ENCODE measurements at regions of chr2 and their contacts with region 1.

Region 1: DNA sequence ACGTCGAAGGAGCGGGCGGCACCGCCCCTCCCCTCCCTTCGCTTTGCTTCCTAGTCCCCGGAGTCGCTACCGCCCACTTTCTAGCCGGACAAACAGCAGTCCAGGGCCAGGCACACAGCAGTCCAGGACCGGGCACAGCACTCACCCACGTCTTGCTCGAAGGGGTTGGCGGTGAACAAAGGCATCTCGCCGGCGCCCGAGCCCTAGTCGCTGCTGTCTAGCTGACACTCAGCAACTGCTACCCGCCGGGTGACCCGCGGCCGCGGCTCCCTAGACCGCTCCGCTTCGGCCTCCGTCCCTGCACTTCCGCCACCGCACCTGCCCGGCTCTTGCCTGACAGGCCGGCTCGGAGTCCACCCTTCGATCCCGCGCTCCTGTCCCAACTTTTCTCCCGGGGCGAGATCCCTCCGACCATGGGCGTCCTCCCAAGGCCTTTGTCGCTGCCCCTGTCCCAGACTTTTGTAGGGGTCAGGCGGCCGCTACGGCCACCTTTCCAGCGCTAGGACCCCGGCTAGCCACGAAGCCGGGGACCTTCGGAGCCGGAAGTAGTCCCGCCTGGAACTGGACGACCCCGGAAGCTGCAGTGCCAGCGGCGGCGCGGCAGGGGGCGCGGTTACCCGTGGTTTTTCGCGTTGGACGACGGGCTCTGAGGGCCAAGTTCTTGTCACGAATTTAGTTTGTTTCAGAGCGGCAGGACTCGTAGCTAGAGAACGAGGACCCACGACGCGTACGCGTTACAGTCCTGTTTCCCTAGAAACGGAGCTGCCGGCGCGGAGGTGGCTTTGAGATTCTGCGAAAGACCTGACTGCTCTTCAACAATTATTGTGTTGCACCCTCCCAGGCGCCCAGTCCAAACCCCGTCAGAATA is at the start of gene STAM2:
- DNase-seq: peak; percentile 94
- ATAC-seq: peak; percentile 84
- H3K4me3 Mint-ChIP-seq: peak within 1 kb of the TSS; percentile 97
- H3K27ac Mint-ChIP-seq: peak within 1 kb of the TSS; percentile 100
- H3K4me1 Mint-ChIP-seq: peaks cover 40% of the 10 kb centered on the region
- H3K27me3 Mint-ChIP-seq: peaks cover 2% of the 10 kb centered on the region
- CTCF ChIP-seq: peak; percentile 25
- total RNA-seq, gene STAM2: 24.5 and 27.4 TPM in 2 replicates

Region 2: DNA sequence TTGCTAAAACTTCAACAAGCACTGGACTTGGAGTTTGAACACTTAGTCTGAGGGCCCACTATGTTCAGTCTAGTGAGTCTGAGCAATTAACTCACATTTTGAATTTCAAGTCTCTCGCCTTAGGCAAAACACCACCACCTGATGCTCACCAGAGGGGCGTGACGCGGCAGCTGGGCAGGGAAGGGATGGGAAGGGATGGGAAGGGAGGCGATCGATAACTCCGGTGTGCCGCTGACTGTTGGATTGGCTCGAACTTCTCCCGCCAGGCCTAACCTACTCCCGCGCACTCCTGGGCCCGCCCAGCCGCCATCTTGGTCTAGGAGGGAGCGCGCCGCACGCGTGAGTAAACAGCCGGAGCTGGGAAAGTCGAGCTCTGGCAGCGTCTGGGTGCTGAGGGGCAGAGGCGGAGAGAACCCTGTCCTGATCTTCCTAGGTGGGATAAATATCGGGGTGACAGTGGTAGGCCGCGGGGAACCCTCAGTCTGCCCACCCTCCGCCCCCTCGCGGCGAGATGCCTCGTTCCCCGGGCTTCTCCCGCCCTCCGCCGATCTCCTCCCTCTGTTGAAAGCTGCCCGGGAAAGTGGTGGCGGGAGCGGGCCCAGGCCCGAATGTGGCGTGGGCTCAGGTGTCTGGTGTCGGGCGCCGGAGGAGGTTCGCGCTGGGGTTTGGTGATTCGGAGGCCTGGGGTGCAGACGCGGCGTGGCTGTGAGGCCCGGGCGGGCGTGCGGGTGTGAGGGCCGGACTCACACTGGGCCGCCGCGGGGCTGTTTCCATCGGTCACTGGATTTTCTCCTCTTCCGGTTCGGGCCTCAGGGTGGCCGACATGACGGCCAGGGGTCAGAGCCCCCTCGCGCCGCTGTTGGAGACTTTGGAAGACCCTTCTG is 765.8 kb before region 1 on chr2 and contains the start of gene RIF1:
- CTCF ChIA-PET with region 1: no interaction called
- POLR2A ChIA-PET with region 1: interaction called, 9 read pairs
- intact Hi-C with region 1: loop called (anchors 5 kb)
- DNase-seq: peak; percentile 73
- ATAC-seq: peak; percentile 90
- H3K4me3 Mint-ChIP-seq: peak within 1 kb of the TSS; percentile 89
- H3K27ac Mint-ChIP-seq: peak within 1 kb of the TSS; percentile 80
- H3K4me1 Mint-ChIP-seq: peaks cover 26% of the 10 kb centered on the region
- H3K27me3 Mint-ChIP-seq: no peaks in the 10 kb centered on the region
- CTCF ChIP-seq: no peak
- total RNA-seq, gene RIF1: 43.7 and 51.1 TPM in 2 replicates

Region 3: DNA sequence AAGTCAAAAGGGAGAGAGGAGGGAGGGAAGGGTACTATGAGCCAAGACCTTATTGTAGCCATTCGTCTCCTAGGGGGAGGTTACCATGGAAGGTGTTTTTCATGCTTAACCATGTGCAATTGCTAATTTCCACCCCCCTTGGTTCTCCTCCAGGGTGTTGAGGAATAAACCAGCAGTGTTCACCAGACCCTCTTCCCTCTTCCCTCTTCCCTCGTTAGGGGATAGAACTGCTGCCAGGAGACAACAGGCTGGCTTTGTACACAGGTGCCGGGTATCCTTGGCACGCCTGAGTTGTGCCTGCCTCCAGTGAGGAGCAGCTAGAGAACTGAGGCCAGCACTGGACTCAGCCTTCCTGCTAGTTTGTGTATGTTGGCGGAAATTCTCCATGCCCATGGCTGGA is 306.4 kb before region 1 on chr2:
- CTCF ChIA-PET with region 1: no interaction called
- POLR2A ChIA-PET with region 1: no interaction called
- intact Hi-C with region 1: no loop called
- DNase-seq: no peak
- ATAC-seq: no peak
- H3K4me3 Mint-ChIP-seq: no peak overlapping the region
- H3K27ac Mint-ChIP-seq: no peak overlapping the region
- H3K4me1 Mint-ChIP-seq: no peaks in the 10 kb centered on the region
- H3K27me3 Mint-ChIP-seq: peaks cover 1% of the 10 kb centered on the region
- CTCF ChIP-seq: no peak

Region 4: DNA sequence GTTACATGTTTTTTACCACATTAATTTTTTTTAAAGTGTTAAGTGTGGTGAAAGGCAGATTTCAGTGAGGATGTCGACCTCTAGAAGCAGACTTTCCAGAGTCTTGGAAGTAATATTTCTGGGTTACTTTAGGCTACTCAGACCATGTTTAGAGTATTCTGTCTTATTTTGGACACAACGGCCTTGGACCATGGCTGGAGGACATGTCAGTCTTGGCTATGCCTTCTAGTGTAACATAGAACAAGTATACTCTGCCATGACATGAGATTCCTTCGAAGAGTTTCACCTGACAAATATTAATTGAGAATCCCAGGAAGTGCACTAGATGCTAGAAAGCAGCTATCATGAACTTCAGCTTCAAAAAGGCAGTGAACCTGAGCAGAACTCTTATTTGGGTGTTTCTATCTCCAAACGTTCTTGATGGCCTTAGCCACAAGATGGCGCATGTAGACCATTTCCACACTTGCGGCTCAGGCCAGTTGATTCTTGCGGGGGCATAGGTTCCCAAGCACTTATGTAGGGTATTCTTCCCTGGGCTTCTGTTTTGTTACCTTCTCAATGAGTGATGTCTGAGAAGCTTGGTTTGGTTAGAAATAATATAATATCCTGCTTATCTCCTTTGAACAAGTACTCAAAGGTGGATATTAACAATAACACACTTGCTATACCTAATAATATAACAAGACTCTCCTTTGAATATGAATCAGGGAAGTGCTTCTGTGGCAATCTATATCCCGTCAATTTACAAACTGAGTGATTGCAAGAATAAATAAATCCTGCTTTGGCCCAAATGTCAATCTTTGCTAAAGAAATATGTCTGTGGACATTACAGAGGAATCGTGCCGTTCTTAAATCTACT is 138.9 kb before region 1 on chr2:
- CTCF ChIA-PET with region 1: interaction called, 6 read pairs
- POLR2A ChIA-PET with region 1: no interaction called
- intact Hi-C with region 1: loop called (anchors 2 kb)
- DNase-seq: peak; percentile 19
- ATAC-seq: peak; percentile 50
- H3K4me3 Mint-ChIP-seq: no peak overlapping the region
- H3K27ac Mint-ChIP-seq: no peak overlapping the region
- H3K4me1 Mint-ChIP-seq: no peaks in the 10 kb centered on the region
- H3K27me3 Mint-ChIP-seq: no peaks in the 10 kb centered on the region
- CTCF ChIP-seq: peak; percentile 52

Region 5: DNA sequence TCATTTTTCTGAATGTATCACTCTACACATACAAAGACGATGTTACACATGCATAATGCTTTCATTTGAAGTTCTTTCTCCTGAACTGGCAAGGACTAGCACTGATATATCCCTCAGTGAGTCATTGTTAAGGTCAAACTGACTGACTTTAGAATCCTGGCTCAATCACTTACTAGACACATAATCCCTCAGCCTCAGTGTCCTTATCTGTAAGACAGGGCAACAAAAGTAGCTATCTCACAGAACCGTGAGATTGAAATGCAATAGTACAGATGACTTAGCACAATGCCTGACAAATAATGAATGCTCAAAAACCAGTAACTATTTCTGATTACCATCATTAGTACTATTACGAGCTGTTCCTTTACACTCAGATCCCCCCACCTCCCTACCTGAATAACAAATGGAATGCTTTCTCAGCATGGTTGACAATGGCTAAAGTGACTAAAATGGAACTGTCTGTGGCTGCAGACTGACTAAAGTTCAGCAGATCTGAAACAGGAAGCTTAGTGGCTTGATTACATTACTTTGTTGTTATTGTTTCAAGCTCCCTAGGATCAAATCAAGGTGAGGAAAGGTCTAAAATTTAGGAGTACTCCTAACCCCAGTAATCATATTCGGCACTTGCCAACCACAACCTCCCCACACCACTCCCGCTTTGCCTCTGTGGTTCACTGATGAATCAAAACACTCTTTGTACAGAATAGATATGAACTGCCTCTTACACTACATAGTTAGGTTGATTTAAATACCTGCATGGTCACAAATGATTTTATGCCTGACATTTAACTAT is 41.0 kb before region 1 on chr2:
- CTCF ChIA-PET with region 1: no interaction called
- POLR2A ChIA-PET with region 1: no interaction called
- intact Hi-C with region 1: no loop called
- DNase-seq: no peak
- ATAC-seq: no peak
- H3K4me3 Mint-ChIP-seq: no peak overlapping the region
- H3K27ac Mint-ChIP-seq: no peak overlapping the region
- H3K4me1 Mint-ChIP-seq: no peaks in the 10 kb centered on the region
- H3K27me3 Mint-ChIP-seq: no peaks in the 10 kb centered on the region
- CTCF ChIP-seq: no peak

Region 6: GRCh38 chr2:152154462-152154861 is 21.2 kb before region 1 on chr2:
- CTCF ChIA-PET with region 1: no interaction called
- POLR2A ChIA-PET with region 1: no interaction called
- intact Hi-C with region 1: loop called (anchors 2 kb)
- DNase-seq: no peak
- ATAC-seq: no peak
- H3K4me3 Mint-ChIP-seq: no peak overlapping the region
- H3K27ac Mint-ChIP-seq: no peak overlapping the region
- H3K4me1 Mint-ChIP-seq: peaks cover 25% of the 10 kb centered on the region
- H3K27me3 Mint-ChIP-seq: no peaks in the 10 kb centered on the region
- CTCF ChIP-seq: no peak

Region 7: GRCh38 chr2:152263911-152264310 is 88.2 kb after region 1 on chr2:
- CTCF ChIA-PET with region 1: no interaction called
- POLR2A ChIA-PET with region 1: no interaction called
- intact Hi-C with region 1: no loop called
- DNase-seq: no peak
- ATAC-seq: no peak
- H3K4me3 Mint-ChIP-seq: no peak overlapping the region
- H3K27ac Mint-ChIP-seq: no peak overlapping the region
- H3K4me1 Mint-ChIP-seq: no peaks in the 10 kb centered on the region
- H3K27me3 Mint-ChIP-seq: peaks cover 7% of the 10 kb centered on the region
- CTCF ChIP-seq: no peak

Region 8: GRCh38 chr2:152627351-152627957 is 451.8 kb after region 1 on chr2:
- CTCF ChIA-PET with region 1: interaction called, 12 read pairs
- POLR2A ChIA-PET with region 1: no interaction called
- intact Hi-C with region 1: loop called (anchors 1 kb)
- DNase-seq: no peak
- ATAC-seq: no peak
- H3K4me3 Mint-ChIP-seq: no peak overlapping the region
- H3K27ac Mint-ChIP-seq: no peak overlapping the region
- H3K4me1 Mint-ChIP-seq: no peaks in the 10 kb centered on the region
- H3K27me3 Mint-ChIP-seq: no peaks in the 10 kb centered on the region
- CTCF ChIP-seq: no peak

Region 9: DNA sequence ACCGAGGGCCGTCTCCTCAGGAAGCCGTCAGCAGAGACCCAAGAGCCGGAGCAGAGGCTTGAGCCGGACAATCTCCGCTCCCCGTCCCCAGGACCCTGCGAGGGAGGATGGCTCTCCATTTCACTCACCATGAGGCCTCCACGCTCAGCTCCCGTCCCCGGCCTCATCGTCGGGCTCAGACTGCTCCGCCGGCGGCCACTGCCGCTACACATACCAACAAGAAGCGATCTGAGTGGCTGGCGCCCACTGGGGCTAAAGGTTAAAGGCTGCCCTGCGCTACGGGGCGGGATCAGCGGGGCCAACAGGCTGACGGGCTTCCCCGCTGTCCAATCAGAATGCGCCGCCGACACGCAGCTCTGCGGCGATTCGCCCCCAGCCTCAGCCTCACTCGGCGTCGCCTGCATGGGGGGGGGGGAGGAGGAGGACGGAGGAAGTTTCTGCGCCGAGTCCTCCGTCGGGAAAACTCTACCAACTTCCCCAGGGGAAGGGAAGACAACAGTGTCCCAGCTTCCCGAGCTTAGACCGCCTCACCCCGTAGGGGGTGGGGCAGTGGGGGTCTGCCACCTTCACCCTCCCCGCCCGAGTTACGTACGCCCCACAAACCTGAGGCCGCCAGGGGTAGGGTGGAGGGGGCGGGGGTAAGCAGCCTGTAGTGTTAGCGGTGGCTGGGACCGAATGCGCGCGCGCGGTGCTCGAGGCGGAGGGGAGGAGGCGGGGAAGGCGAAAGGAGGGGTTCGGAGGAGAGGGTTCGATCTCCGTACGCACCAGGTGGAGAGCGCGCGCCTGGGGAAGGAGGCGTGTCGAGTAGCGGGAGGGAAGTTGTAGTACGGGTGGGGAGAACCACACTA is 541.8 kb after region 1 on chr2 and contains the start of gene PRPF40A:
- CTCF ChIA-PET with region 1: no interaction called
- POLR2A ChIA-PET with region 1: interaction called, 27 read pairs
- intact Hi-C with region 1: loop called (anchors 1 kb)
- DNase-seq: peak; percentile 97
- ATAC-seq: peak; percentile 76
- H3K4me3 Mint-ChIP-seq: peak within 1 kb of the TSS; percentile 100
- H3K27ac Mint-ChIP-seq: peak within 1 kb of the TSS; percentile 98
- H3K4me1 Mint-ChIP-seq: peaks cover 51% of the 10 kb centered on the region
- H3K27me3 Mint-ChIP-seq: no peaks in the 10 kb centered on the region
- CTCF ChIP-seq: no peak
- total RNA-seq, gene PRPF40A: 126 and 129 TPM in 2 replicates

Region 10: DNA sequence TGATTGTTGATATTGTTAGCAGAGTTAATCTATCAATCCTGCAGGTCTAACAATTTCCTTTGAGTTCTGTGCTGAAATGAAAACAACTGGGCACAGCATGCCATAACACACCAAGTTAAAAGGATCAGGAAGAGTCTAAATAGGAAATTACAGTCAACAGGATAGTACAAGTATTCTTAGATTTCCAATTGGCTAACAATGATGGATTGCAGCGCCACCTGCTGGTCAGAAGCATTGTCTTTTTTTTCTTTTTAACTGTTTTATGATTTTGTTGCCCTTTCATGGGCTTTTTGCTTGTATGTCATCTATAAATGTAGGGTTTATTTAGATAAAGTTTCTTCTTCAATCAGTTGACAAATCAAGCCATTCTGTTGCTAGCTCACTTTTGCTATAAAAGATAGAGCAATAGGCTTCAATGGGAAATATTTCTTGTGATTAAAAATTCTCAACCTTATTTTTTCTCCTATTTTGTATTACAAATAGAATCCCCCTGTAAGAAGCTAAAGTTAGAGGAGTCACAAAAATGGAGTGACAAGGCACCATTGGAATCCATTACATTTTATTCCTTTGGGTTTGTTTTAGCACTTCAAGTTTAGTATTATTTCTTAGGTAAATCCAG is 1343.7 kb after region 1 on chr2:
- CTCF ChIA-PET with region 1: no interaction called
- POLR2A ChIA-PET with region 1: no interaction called
- intact Hi-C with region 1: loop called (anchors 1 kb)
- DNase-seq: no peak
- ATAC-seq: no peak
- H3K4me3 Mint-ChIP-seq: no peak overlapping the region
- H3K27ac Mint-ChIP-seq: no peak overlapping the region
- H3K4me1 Mint-ChIP-seq: no peaks in the 10 kb centered on the region
- H3K27me3 Mint-ChIP-seq: no peaks in the 10 kb centered on the region
- CTCF ChIP-seq: no peak